ENCODE measurements at regions of chr2 and their contacts with region 1.

Region 1: DNA sequence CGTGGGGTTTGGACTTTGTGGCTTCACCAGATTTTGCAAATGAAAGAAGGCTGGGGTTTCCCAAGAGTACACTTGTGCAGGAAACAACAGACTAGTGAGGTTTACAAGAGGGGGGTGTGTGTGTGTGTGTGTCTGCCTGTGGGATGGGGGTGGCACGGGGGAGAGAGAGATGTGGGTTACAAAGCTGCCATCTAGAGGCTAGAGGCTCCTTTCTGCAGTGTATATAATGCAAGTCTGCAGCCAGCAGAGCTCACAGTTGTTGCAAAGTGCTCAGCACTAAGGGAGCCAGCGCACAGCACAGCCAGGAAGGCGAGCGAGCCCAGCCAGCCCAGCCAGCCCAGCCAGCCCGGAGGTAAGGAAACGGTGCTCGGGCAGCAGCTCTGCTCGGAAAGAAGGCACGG is at the start of gene ACKR3:
- DNase-seq: peak; percentile 95
- H3K4me3 ChIP-seq: peak within 1 kb of the TSS; percentile 18 to 70 (median 58)
- H3K27ac ChIP-seq: peak within 1 kb of the TSS; percentile 46
- H3K4me1 ChIP-seq: peaks cover 52% of the 10 kb centered on the region
- H3K27me3 ChIP-seq: no peaks in the 10 kb centered on the region
- CTCF ChIP-seq: peak; percentile 55 to 69
- POLR2A ChIP-seq: peak; percentile 87
- total RNA-seq, gene ACKR3: 24.0 and 31.1 TPM in 2 replicates

Region 2: GRCh38 chr2:236168110-236169067 is 401.2 kb before region 1 on chr2 and contains the start of gene GBX2:
- CTCF ChIA-PET with region 1: no interaction called
- POLR2A ChIA-PET with region 1: no interaction called
- dilution Hi-C with region 1: no loop called
- intact Hi-C with region 1: loop called (anchors 5 kb)
- DNase-seq: peak; percentile 92
- H3K4me3 ChIP-seq: peak within 1 kb of the TSS; percentile 59 to 73 (median 68)
- H3K27ac ChIP-seq: peak within 1 kb of the TSS; percentile 11
- H3K4me1 ChIP-seq: peaks cover 25% of the 10 kb centered on the region
- H3K27me3 ChIP-seq: peaks cover 3 to 48% of the 10 kb centered on the region in 2 experiments
- CTCF ChIP-seq: no peak
- POLR2A ChIP-seq: peak; percentile 77
- total RNA-seq, gene GBX2: 3.6 TPM in 2 replicates

Region 3: GRCh38 chr2:236334122-236334876 is 235.3 kb before region 1 on chr2:
- CTCF ChIA-PET with region 1: no interaction called
- POLR2A ChIA-PET with region 1: no interaction called
- dilution Hi-C with region 1: no loop called
- intact Hi-C with region 1: no loop called
- DNase-seq: no peak
- H3K4me3 ChIP-seq: no peak overlapping the region
- H3K27ac ChIP-seq: no peak overlapping the region
- H3K4me1 ChIP-seq: no peaks in the 10 kb centered on the region
- H3K27me3 ChIP-seq: no peaks in the 10 kb centered on the region
- CTCF ChIP-seq: no peak
- POLR2A ChIP-seq: no peak

Region 4: DNA sequence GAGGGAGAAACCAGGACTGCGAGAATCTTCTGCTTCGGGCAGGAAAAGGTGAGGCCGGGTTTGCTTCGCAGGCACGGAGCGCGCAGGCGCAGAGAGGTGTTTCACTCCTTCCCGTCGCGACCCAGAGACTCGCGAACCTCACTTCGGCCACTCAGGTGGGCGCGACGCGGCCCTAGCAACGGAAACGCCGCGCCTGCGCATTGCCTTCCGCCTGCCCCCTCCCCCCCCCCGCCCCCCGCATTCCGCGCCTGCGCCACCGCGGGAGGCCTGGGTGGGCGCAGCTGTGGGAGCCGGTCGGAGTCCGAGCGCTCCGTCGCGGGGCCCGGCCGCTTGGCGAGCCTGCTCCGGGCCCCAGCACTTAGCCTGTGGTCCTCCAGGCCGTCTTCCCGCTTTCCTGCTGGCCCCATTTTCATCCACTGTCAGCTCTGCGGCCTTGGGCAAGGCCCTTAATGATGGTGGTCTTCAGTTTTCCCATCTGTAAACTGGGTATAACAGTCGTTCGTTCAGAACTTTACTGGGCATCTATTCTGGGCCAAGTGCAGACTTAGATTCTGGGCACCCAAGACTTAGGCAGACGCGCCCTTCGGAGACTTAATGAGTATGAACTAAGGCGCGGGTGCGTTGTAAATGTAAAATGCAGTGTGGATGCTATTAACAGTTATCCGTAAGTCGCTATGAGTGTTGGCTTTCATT is 62.0 kb before region 1 on chr2:
- CTCF ChIA-PET with region 1: interaction called, 49 read pairs
- POLR2A ChIA-PET with region 1: no interaction called
- dilution Hi-C with region 1: no loop called
- intact Hi-C with region 1: loop called (anchors 1 kb)
- DNase-seq: peak; percentile 66
- H3K4me3 ChIP-seq: peak overlapping the region; percentile 40 to 75 (median 59)
- H3K27ac ChIP-seq: no peak overlapping the region
- H3K4me1 ChIP-seq: peaks cover 22% of the 10 kb centered on the region
- H3K27me3 ChIP-seq: peaks cover 4 to 9% of the 10 kb centered on the region in 2 experiments
- CTCF ChIP-seq: no peak
- POLR2A ChIP-seq: no peak

Region 5: DNA sequence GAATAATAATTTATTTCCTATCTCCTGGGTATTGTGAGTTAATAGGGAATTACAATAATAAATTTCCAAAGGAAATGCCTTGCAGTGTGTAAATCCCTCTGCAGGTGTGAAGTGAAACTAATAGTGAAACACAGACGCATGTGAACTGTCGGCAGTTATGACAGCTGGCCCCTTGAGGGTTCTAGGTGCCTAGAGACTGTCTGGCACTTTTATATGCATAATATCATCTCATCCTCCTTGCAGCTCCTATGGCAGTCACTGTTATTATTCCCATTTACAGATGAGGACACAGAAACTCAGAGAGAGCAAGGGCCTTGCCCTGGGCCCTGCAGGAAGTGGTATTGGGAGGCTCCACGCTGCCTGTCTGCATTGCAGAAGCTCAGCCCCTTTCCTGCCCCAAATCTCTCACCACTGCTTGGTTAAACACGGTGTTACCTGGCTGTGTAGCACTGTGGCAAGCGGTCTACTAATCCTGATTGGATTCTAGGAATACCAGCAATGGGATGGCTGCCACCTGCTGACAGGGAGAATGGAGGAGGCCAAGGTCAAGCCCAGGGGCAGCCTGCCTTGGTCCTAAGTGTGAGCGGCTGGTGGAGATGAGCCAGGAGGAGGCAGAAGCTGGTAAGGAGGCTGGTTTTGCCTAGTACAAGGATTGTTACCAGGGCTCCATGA is 32.7 kb before region 1 on chr2:
- CTCF ChIA-PET with region 1: interaction called, 3 read pairs
- POLR2A ChIA-PET with region 1: no interaction called
- dilution Hi-C with region 1: no loop called
- intact Hi-C with region 1: loop called (anchors 1 kb)
- DNase-seq: no peak
- H3K4me3 ChIP-seq: no peak overlapping the region
- H3K27ac ChIP-seq: no peak overlapping the region
- H3K4me1 ChIP-seq: peaks cover 12% of the 10 kb centered on the region
- H3K27me3 ChIP-seq: no peaks in the 10 kb centered on the region
- CTCF ChIP-seq: no peak
- POLR2A ChIP-seq: no peak

Region 6: GRCh38 chr2:236631281-236631855 is 61.8 kb after region 1 on chr2:
- CTCF ChIA-PET with region 1: no interaction called
- POLR2A ChIA-PET with region 1: no interaction called
- dilution Hi-C with region 1: no loop called
- intact Hi-C with region 1: no loop called
- DNase-seq: peak; percentile 7
- H3K4me3 ChIP-seq: no peak overlapping the region
- H3K27ac ChIP-seq: no peak overlapping the region
- H3K4me1 ChIP-seq: no peaks in the 10 kb centered on the region
- H3K27me3 ChIP-seq: no peaks in the 10 kb centered on the region
- CTCF ChIP-seq: no peak
- POLR2A ChIP-seq: no peak

Region 7: GRCh38 chr2:237060534-237061312 is 491.1 kb after region 1 on chr2:
- CTCF ChIA-PET with region 1: interaction called, 19 read pairs
- POLR2A ChIA-PET with region 1: no interaction called
- dilution Hi-C with region 1: no loop called
- intact Hi-C with region 1: loop called (anchors 1 kb)
- DNase-seq: peak; percentile 77
- H3K4me3 ChIP-seq: peak overlapping the region in 1 of 3 experiments; percentile 11
- H3K27ac ChIP-seq: peak overlapping the region; percentile 9
- H3K4me1 ChIP-seq: peaks cover 7% of the 10 kb centered on the region
- H3K27me3 ChIP-seq: no peaks in the 10 kb centered on the region
- CTCF ChIP-seq: peak; percentile 65 to 67
- POLR2A ChIP-seq: no peak

Region 8: DNA sequence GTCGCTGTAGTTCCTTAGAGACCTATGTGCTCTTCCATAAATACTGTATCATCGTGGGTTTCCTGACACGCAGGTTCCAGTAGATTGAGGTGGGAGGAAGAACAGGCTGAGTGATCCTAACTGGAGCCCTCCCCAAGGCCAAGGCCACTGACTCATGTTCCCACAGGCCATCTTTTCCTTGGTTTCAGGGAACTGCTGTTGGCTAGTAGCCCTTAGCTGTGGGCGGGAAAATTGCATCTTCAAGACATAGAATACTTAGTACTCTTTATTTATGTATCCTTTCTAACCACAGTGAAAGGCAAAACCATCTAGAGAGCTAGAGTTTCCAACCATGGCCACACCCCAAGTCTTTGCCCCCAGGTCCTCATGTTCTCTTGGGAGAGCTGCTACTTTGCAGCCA is 572.0 kb after region 1 on chr2:
- CTCF ChIA-PET with region 1: no interaction called
- POLR2A ChIA-PET with region 1: no interaction called
- dilution Hi-C with region 1: no loop called
- intact Hi-C with region 1: no loop called
- DNase-seq: no peak
- H3K4me3 ChIP-seq: no peak overlapping the region
- H3K27ac ChIP-seq: no peak overlapping the region
- H3K4me1 ChIP-seq: no peaks in the 10 kb centered on the region
- H3K27me3 ChIP-seq: no peaks in the 10 kb centered on the region
- CTCF ChIP-seq: no peak
- POLR2A ChIP-seq: no peak